MCF 10A (cell line): ENCODE measurements at regions of chr17 and their contacts with region 1.

Region 1: GRCh38 chr17:80832888-80833583 is 158.6 kb upstream of the CHMP6 start:
- DNase-seq: peak; percentile 97
- H3K4me3 Mint-ChIP-seq: peak overlapping the region; percentile 79
- H3K27ac Mint-ChIP-seq: peak overlapping the region; percentile 93
- H3K4me1 Mint-ChIP-seq: peaks cover 15% of the 10 kb centered on the region
- H3K27me3 Mint-ChIP-seq: no peaks in the 10 kb centered on the region
- CTCF ChIP-seq: no peak

Region 2: DNA sequence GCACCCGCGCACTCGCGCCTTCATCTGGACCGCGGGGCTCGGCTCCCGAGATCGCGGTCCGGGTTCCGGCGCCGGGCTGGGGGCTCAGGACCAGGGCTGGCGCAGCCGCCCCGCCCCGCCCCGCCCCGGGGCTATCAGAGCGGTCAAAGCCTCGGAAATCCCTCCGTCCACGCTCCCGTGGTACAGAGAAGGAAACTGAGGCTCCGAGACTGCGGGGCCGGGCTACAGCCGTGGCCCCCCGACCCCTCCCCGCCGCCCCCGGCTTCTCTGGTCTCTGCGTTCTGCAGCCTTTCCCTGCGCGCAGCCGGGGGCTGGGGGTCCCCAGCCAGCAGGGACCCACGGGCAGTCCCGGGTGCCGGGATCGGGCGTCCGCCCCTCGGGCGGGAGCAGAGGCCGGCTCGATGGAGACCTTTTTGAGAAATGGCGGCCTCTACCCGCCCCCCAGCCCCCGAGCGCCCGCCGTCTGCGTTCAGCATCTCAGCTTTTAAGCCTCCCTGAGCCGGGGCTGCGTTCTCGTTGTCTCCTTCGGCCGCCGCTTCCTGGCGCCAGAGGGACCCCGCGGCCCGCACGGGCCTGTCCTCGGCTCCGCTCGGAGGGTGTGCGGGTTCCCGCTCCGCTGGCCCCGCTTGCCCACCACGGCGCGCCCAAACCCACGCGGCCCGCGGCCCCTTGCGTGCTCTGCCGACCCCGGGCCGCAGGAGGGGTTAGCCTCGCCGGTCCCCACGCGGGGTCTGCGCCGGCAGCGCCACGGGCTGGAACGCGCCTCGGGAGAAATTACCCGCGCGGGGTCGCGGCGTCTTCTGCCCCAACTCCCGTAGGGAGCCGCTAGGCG is 355.2 kb before region 1 on chr17:
- CTCF ChIA-PET with region 1: no interaction called
- POLR2A ChIA-PET with region 1: no interaction called
- intact Hi-C with region 1: loop called (anchors 10 kb)
- DNase-seq: no peak
- H3K4me3 Mint-ChIP-seq: no peak overlapping the region
- H3K27ac Mint-ChIP-seq: no peak overlapping the region
- H3K4me1 Mint-ChIP-seq: peaks cover 9% of the 10 kb centered on the region
- H3K27me3 Mint-ChIP-seq: peaks cover 59% of the 10 kb centered on the region
- CTCF ChIP-seq: no peak

Region 3: DNA sequence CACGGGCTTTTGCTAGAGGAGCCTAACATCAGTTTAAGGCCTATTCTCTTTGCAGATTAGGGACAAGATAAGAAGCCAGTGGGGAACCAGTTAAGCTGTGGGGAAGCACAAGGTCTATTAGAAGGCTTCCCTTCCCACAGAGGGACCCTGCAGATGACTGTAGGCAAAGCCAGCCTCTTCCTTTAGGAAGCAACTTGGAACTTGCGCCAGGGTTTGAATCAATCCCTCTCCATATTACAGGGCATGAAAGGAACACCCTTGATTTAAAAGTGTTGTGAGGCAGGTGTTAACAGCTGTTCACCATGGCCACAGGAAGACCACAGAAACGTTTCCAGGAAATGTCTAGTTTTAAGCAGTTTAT is 211.1 kb before region 1 on chr17:
- CTCF ChIA-PET with region 1: no interaction called
- POLR2A ChIA-PET with region 1: no interaction called
- intact Hi-C with region 1: no loop called
- DNase-seq: no peak
- H3K4me3 Mint-ChIP-seq: no peak overlapping the region
- H3K27ac Mint-ChIP-seq: no peak overlapping the region
- H3K4me1 Mint-ChIP-seq: peaks cover 15% of the 10 kb centered on the region
- H3K27me3 Mint-ChIP-seq: no peaks in the 10 kb centered on the region
- CTCF ChIP-seq: no peak

Region 4: GRCh38 chr17:80720610-80721577 is 112.1 kb before region 1 on chr17:
- CTCF ChIA-PET with region 1: no interaction called
- POLR2A ChIA-PET with region 1: interaction called, 4 read pairs
- intact Hi-C with region 1: loop called (anchors 10 kb)
- DNase-seq: peak; percentile 97
- H3K4me3 Mint-ChIP-seq: peak overlapping the region; percentile 62
- H3K27ac Mint-ChIP-seq: peak overlapping the region; percentile 86
- H3K4me1 Mint-ChIP-seq: peaks cover 50% of the 10 kb centered on the region
- H3K27me3 Mint-ChIP-seq: no peaks in the 10 kb centered on the region
- CTCF ChIP-seq: no peak

Region 5: GRCh38 chr17:80761110-80761871 is 71.7 kb before region 1 on chr17:
- CTCF ChIA-PET with region 1: no interaction called
- POLR2A ChIA-PET with region 1: interaction called, 6 read pairs
- intact Hi-C with region 1: loop called (anchors 2 kb)
- DNase-seq: peak; percentile 77
- H3K4me3 Mint-ChIP-seq: peak overlapping the region; percentile 59
- H3K27ac Mint-ChIP-seq: peak overlapping the region; percentile 75
- H3K4me1 Mint-ChIP-seq: peaks cover 24% of the 10 kb centered on the region
- H3K27me3 Mint-ChIP-seq: no peaks in the 10 kb centered on the region
- CTCF ChIP-seq: no peak

Region 6: DNA sequence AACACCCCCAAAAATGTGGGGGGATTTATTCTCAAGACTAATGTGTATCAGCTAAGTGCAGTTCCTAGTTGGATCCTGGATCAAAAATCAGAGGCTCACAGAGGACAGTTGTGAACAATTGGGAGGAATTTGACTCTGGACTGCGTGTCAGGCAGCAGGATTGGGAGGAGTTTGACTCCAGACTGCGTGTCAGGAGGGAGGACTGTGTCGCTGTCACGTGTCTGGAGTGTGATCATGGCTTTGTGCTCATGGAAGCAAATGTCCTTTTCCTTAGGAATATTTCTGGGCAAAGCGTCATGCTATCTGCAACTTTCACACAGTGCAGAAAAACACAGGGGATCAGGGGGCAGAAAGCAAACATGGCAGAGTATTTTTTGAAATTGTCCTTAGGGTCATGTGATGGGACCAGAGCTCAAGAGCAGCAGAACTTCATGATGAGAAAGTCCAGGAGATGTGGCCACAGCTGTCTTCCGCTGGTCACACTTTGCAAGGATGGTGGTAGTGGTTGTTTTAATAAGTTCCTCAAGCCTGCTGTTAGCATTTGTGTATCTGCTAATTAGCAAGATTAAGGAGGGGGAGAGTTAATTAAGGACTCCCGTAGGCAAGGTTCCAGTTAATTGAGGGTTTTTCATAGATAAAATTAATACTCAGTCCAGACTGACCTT is 36.6 kb after region 1 on chr17:
- CTCF ChIA-PET with region 1: no interaction called
- POLR2A ChIA-PET with region 1: no interaction called
- intact Hi-C with region 1: no loop called
- DNase-seq: no peak
- H3K4me3 Mint-ChIP-seq: no peak overlapping the region
- H3K27ac Mint-ChIP-seq: no peak overlapping the region
- H3K4me1 Mint-ChIP-seq: peaks cover 9% of the 10 kb centered on the region
- H3K27me3 Mint-ChIP-seq: no peaks in the 10 kb centered on the region
- CTCF ChIP-seq: no peak

Region 7: DNA sequence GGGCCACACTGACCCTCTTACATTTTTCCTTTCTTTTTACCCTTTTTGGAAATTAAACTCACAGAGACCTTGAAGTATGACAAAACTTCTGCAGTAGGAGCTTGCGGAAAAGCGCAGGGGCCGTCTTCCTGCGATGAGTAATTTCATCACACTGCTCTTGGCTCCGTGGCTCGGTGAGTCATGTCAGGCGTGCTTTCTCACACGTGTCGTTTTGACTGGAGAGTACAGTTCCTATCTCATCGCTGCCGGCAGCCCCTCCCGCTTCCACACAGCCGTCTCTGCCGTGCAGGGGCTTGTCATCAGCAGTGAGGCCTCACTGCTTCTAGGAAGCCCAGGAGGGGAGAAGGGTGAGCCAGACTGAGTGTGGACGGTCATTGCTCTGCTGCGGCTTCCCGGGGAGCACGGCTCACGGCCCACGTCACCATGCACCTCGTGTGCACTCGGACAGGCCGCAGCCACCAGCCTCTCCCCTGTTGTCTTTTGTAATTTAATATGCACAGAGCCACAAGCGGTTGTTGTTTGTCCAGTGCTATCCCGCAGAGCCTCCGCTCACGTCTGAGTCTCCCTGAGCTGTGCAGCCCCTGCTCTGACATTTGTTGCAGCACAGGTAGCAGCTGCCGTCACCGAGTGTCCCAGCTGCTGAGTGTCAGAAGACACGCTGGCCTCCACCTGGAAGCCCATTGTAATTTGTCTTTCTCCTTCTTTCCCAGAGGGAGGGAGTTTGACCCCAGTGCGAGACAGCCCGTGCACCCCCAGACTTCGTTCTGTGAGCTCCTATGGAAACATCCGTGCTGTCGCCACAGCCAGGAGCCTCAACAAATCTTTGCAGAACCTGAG is 59.2 kb after region 1 on chr17:
- CTCF ChIA-PET with region 1: interaction called, 12 read pairs
- POLR2A ChIA-PET with region 1: interaction called, 10 read pairs
- intact Hi-C with region 1: no loop called
- DNase-seq: peak; percentile 98
- H3K4me3 Mint-ChIP-seq: peak overlapping the region; percentile 62
- H3K27ac Mint-ChIP-seq: peak overlapping the region; percentile 92
- H3K4me1 Mint-ChIP-seq: peaks cover 31% of the 10 kb centered on the region
- H3K27me3 Mint-ChIP-seq: no peaks in the 10 kb centered on the region
- CTCF ChIP-seq: peak; percentile 32

Region 8: GRCh38 chr17:81002409-81003361 is 169.6 kb after region 1 on chr17:
- CTCF ChIA-PET with region 1: no interaction called
- POLR2A ChIA-PET with region 1: no interaction called
- intact Hi-C with region 1: no loop called
- DNase-seq: peak; percentile 64
- H3K4me3 Mint-ChIP-seq: peak overlapping the region; percentile 10
- H3K27ac Mint-ChIP-seq: no peak overlapping the region
- H3K4me1 Mint-ChIP-seq: peaks cover 11% of the 10 kb centered on the region
- H3K27me3 Mint-ChIP-seq: peaks cover 30% of the 10 kb centered on the region
- CTCF ChIP-seq: no peak